ENCODE measurements at regions of chr1 and their contacts with region 1.

Region 1: GRCh38 chr1:192700834-192701271 is 64.9 kb downstream of the RGS13 start:
- DNase-seq: no peak
- ATAC-seq: no peak
- H3K4me3 ChIP-seq: no peak overlapping the region
- H3K27ac ChIP-seq: no peak overlapping the region
- H3K4me1 ChIP-seq: no peaks in the 10 kb centered on the region
- H3K27me3 ChIP-seq: no peaks in the 10 kb centered on the region
- CTCF ChIP-seq: no peak

Region 2: GRCh38 chr1:192539297-192540092 is 161.4 kb before region 1 on chr1:
- CTCF ChIA-PET with region 1: no interaction called
- POLR2A ChIA-PET with region 1: no interaction called
- in situ Hi-C with region 1: no loop called
- intact Hi-C with region 1: no loop called
- DNase-seq: no peak
- ATAC-seq: peak; percentile 93
- H3K4me3 ChIP-seq: no peak overlapping the region
- H3K27ac ChIP-seq: no peak overlapping the region
- H3K4me1 ChIP-seq: peaks cover 5% of the 10 kb centered on the region; the same call in 1 of the 2 replicates
- H3K27me3 ChIP-seq: no peaks in the 10 kb centered on the region
- CTCF ChIP-seq: no peak

Region 3: GRCh38 chr1:192726820-192727504 is 26.1 kb after region 1 on chr1:
- CTCF ChIA-PET with region 1: no interaction called
- POLR2A ChIA-PET with region 1: interaction called, 12 read pairs
- in situ Hi-C with region 1: no loop called
- intact Hi-C with region 1: no loop called
- DNase-seq: no peak
- ATAC-seq: no peak
- H3K4me3 ChIP-seq: no peak overlapping the region
- H3K27ac ChIP-seq: no peak overlapping the region
- H3K4me1 ChIP-seq: no peaks in the 10 kb centered on the region
- H3K27me3 ChIP-seq: no peaks in the 10 kb centered on the region
- CTCF ChIP-seq: no peak

Region 4: GRCh38 chr1:193009501-193009900 is 308.6 kb after region 1 on chr1:
- CTCF ChIA-PET with region 1: no interaction called
- POLR2A ChIA-PET with region 1: interaction called, 12 read pairs
- in situ Hi-C with region 1: no loop called
- intact Hi-C with region 1: no loop called
- DNase-seq: no peak
- ATAC-seq: no peak
- H3K4me3 ChIP-seq: no peak overlapping the region
- H3K27ac ChIP-seq: no peak overlapping the region
- H3K4me1 ChIP-seq: no peaks in the 10 kb centered on the region
- H3K27me3 ChIP-seq: no peaks in the 10 kb centered on the region
- CTCF ChIP-seq: no peak

Measured in Panc1 (cell line).